ENCODE measurements at regions of chr2 and their contacts with region 1.

Region 1: GRCh38 chr2:24490674-24491625 is at the start of gene NCOA1:
- DNase-seq: peak; percentile 96
- total RNA-seq, gene NCOA1: 31.9 TPM

Region 2: DNA sequence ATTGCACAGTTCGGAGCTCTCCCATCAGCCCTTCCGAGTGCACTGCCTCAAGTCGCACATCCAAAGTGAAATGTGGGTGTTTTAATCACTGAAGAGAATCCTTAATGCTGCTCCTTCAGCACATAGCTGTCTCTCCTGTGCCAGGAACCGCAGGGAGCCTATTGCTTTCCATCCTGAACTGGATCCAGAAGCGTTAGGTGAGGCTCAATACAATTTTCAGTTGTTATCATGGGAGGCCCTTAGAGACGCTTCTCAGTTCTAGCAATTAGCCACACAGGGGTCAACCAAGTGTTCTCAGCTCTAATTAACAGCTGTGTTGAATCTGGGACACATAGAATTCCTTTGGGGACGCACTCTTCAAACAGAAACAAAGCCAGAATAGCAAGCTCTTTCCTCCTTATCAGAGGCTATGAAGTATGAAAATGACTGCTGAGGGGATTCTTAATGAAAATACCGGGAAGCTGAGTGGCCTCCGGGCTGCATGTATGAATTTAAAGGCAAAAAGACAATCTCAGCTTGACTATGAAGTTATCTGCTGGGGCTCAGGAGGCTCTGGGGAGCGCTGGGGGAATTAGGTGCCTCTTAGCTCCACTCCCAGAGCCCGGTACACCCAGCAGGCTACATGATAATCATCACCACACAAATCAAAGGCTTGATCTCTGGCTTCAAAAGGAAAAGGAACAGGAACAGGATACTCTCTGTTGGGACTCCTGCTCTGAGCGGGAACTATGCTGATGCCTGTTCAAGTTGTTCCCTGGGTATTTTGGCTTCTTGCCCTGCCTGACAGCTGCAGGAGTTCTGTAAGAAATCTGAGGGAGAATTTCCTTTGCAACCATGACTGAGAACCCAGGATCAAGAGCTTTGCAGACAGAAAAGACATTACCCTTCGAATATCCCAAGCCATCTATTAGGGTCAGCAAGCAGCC is 55.3 kb before region 1 on chr2:
- intact Hi-C with region 1: loop called (anchors 2 kb)
- DNase-seq: no peak

Region 3: DNA sequence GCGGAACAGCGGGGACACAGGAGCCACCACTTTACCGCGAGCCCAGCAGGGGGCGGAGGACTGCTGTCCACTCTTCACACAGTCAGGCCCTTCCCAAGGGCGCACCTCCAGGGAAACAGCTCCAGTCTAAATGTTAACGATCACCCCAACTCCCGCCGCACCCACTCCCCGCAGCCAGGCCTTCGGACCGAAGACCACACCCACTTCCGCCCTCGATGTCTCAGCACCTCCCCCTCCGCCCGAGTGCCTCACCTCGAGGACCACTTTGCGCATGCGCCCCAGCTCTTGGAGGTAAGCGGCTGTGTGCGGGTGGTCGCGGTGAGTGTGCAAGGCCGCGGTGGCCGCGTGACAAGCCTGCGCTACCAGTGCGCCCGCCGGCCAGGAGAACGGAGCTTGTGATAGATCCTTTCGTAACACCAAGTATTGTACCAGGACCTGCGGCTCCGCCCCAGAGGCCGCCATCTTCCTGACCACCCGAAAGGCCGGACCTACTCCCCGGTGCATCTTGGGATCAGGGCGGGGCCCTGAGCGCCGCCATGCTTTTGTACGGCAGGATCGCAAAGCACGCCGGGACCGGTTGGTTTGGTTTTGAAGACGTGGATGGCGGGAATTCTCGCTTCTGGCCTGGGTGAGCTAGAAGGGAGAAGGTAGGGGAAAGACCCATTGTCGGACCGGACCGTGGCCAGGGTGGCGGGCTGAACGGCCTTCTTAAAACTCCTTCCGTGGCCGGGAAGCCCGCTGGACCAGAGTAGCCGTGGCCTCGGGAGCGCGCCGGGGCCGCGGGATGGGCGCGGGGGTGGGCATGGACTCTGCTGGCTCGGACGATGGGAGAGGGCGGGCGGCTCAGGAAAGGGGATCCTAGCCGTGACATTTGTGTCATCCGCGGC is 302.2 kb after region 1 on chr2 and contains the starts of genes CENPO and PTRHD1:
- intact Hi-C with region 1: loop called (anchors 2 kb)
- DNase-seq: peak; percentile 99
- total RNA-seq, gene CENPO: 2.3 TPM
- total RNA-seq, gene PTRHD1: 23.2 TPM

Measured in cardiac septum (tissue), 1 donor.